Activated naive CD4-positive, alpha-beta T cell treated with anti-CD3 and anti-CD28 coated beads for 36 hours (primary cell): ENCODE measurements at regions of chr22 and their contacts with region 1.

Region 1: GRCh38 chr22:38755911-38756532 is at the start of gene SUN2:
- DNase-seq: peak; percentile 94
- H3K4me3 Mint-ChIP-seq: peak within 1 kb of the TSS; percentile 92
- H3K27ac Mint-ChIP-seq: peak within 1 kb of the TSS; percentile 92
- H3K4me1 Mint-ChIP-seq: peaks cover 52% of the 10 kb centered on the region
- H3K27me3 Mint-ChIP-seq: no peaks in the 10 kb centered on the region
- total RNA-seq, gene SUN2: 120 to 121 TPM

Region 2: DNA sequence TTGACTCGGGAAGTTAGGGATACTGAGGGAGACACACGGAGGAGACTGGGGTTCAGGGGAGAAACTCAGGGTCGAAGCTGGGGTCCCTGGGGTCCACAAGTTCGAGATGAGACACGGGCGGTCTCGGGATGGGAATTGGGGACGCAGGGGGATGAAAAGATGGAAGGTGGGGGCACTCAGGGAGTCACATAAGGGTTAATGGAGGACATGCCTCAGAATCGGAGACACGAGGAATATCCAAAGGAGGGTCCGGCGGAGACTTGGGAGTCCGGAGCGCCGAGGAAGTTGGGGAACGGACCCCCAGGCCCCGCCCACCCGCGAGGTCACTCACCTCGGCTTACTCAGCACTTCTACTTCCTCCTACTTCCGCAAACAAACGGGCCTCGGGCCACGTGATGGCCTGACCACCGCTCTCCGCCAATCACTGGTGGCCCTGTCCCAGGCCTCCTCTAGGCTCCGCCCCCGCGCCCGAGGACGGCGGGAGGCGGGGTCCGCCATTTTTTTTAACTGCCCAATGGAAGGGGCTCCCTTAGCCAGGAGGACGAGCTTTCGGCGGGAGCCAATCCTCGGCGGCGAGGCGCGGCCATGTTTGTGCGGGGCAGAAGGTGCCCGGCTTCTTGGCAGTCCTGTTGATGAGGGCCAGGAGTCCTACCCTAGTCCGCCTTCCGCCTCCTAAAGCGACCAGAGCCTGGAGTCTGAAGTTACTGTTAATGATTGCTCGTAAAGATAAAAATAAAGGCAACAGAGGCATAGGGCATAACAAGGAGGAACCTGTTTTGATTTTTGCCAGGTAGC is 574.4 kb before region 1 on chr22 and contains the start of gene PLA2G6:
- CTCF ChIA-PET with region 1: no interaction called
- intact Hi-C with region 1: loop called (anchors 5 kb)
- DNase-seq: peak; percentile 99
- H3K4me3 Mint-ChIP-seq: peak within 1 kb of the TSS; percentile 94
- H3K27ac Mint-ChIP-seq: peak within 1 kb of the TSS; percentile 96
- H3K4me1 Mint-ChIP-seq: peaks cover 43% of the 10 kb centered on the region
- H3K27me3 Mint-ChIP-seq: no peaks in the 10 kb centered on the region
- total RNA-seq, gene PLA2G6: 80.2 to 85.3 TPM

Region 3: GRCh38 chr22:38733329-38733723 is 22.7 kb before region 1 on chr22:
- CTCF ChIA-PET with region 1: interaction called, 11 read pairs
- intact Hi-C with region 1: no loop called
- DNase-seq: peak; percentile 65
- H3K4me3 Mint-ChIP-seq: no peak overlapping the region
- H3K27ac Mint-ChIP-seq: peak overlapping the region; percentile 59
- H3K4me1 Mint-ChIP-seq: peaks cover 30% of the 10 kb centered on the region
- H3K27me3 Mint-ChIP-seq: no peaks in the 10 kb centered on the region

Region 4: DNA sequence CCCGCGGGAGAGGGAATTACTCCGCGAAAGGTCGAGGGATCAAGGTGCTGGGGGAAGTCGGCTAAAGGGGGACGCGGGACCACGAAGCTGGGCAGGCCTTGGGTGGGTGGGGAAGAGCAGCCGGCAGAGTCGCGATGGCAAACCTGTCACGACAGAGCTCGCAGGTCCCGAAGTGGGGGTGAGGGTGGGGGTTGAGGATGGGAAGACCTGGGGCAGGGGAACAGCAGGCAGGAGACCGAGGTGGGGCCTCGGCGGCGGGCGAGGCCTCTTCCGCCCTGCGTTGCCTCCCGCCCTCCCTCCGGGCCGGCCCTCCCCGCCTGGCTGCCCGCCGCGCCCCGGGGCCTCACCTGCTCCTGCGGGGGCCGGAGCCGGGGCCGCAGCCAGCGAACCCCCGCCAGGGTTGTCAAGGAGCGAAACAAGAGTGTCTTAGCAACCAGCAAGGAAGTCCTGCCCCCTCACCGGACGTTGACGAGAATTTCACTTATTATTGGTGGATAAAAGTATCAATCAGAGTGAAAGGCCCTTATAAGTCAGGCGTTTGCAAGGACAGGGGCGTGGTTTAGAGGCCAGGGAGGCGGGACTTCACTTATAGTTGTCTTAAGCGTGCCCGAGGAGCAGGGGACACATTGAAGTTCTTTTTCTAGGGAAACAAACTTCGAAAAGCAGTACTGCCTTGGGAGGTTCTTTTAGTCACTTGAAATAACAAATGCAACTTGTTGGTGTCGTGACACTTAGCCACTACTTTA is 37.9 kb after region 1 on chr22 and contains the start of gene DNAL4:
- CTCF ChIA-PET with region 1: no interaction called
- intact Hi-C with region 1: loop called (anchors 2 kb)
- DNase-seq: peak; percentile 97
- H3K4me3 Mint-ChIP-seq: peak within 1 kb of the TSS; percentile 76
- H3K27ac Mint-ChIP-seq: peak within 1 kb of the TSS; percentile 46
- H3K4me1 Mint-ChIP-seq: peaks cover 18% of the 10 kb centered on the region
- H3K27me3 Mint-ChIP-seq: no peaks in the 10 kb centered on the region
- total RNA-seq, gene DNAL4: 5.9 to 8.0 TPM

Region 5: DNA sequence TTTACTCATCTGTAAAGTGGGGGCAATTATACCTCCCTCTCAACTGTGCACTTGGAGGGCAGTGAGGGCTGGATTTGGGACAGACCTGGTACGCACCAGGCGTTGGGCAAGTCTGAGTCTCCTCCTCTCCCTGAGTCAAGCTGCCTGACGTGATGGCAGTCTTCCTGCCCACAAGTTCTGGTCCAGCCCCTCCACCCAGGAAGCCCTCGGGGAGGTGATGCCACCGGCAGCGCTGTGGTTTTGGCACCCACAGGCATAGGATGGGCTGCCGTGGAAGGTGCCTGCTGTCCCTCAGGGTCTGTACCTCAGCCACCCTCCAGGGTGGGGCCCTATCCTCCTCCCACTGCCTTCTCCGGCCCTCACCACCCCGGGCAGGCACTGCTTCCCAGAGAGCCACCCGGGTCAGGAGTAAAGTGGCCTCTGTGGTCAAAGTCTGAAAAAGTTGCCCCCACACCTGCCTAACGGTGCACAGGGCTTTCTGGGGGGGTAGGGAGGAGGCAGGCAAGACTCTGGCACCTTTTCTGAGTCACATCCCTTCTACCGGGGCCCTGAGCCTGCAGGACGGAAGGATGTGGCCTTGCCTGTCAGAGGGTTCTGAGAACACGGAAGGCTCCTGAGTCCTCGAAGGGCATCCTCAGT is 334.5 kb after region 1 on chr22:
- CTCF ChIA-PET with region 1: no interaction called
- intact Hi-C with region 1: loop called (anchors 5 kb)
- DNase-seq: peak; percentile 94
- H3K4me3 Mint-ChIP-seq: peak overlapping the region; percentile 54
- H3K27ac Mint-ChIP-seq: peak overlapping the region; percentile 91
- H3K4me1 Mint-ChIP-seq: peaks cover 72% of the 10 kb centered on the region
- H3K27me3 Mint-ChIP-seq: no peaks in the 10 kb centered on the region